ENCODE measurements at regions of chr17 and their contacts with region 1.

Region 1: GRCh38 chr17:30477083-30477773 is at the start of gene GOSR1:
- DNase-seq: peak; percentile 96
- ATAC-seq: peak; percentile 99
- H3K4me3 Mint-ChIP-seq: peak within 1 kb of the TSS; percentile 95
- H3K27ac Mint-ChIP-seq: peak within 1 kb of the TSS; percentile 97
- H3K4me1 Mint-ChIP-seq: peaks cover 30% of the 10 kb centered on the region
- H3K27me3 Mint-ChIP-seq: peaks cover 6% of the 10 kb centered on the region
- total RNA-seq, gene GOSR1: 41.5 to 44.0 TPM

Region 2: DNA sequence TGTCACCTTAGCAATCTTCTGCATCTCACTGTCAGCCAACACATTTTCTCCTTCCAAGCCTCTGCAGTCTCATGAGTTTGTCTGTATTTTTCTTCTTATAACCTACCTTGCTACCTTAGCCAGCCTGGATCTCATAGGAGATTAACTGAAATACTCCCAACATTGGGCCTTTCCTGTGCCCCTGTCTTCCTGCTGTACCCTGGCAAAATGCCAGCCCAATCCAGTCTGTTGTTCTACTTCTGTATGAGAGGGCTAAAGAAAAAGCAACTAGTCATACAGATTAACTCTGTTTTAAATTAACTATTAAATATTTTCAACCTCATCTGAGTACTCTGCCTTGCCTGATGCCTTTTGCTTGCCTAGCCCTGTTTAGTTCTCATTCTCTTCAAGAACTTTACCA is 18.4 kb after region 1 on chr17:
- CTCF ChIA-PET with region 1: interaction called, 14 read pairs
- POLR2A ChIA-PET with region 1: no interaction called
- DNase-seq: no peak
- ATAC-seq: no peak
- H3K4me3 Mint-ChIP-seq: no peak overlapping the region
- H3K27ac Mint-ChIP-seq: no peak overlapping the region
- H3K4me1 Mint-ChIP-seq: peaks cover 11% of the 10 kb centered on the region
- H3K27me3 Mint-ChIP-seq: no peaks in the 10 kb centered on the region

Region 3: DNA sequence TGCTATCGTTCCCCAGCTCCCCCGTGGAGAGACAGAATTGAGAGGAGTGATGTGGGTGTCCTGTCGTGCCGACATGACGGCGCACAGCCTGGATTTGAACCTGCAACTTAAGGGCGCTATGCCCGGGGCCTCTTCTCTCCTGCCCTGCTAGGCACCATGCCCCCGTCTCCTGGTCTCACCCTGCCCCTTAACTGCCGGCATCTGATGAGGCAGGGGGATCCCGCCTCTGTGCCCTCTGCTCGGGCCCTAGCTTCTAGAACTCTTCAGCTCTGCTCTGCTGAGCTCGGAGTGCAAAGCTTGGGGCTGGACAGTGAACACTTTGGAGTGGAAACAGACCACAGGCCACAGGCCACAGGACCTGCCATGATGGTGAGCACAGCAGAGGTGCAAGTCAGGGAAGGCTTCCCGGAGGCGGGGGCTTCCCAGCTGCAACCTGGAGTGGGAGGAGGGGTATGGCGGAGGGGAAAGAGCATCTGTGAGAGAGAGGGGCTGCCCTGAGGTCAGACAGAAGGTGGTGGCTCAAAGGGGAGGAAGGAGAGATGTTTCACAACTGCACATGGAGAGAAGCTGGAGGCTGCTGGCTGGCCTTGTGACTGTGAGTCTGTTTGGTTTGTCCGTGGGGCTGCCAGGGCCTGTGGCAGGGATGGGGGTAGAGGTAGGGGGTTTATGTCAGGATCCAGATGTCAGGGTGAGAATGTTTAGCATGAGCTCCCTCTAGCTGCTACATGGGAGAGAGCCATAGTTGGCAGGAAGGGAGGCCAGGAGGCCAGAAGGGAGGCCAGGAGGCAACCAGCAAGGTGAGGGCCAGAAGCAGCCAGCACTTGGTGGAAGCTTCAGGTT is 239.5 kb after region 1 on chr17:
- CTCF ChIA-PET with region 1: interaction called, 13 read pairs
- POLR2A ChIA-PET with region 1: no interaction called
- DNase-seq: no peak
- ATAC-seq: no peak
- H3K4me3 Mint-ChIP-seq: no peak overlapping the region
- H3K27ac Mint-ChIP-seq: no peak overlapping the region
- H3K4me1 Mint-ChIP-seq: peaks cover 12% of the 10 kb centered on the region
- H3K27me3 Mint-ChIP-seq: peaks cover under 1% of the 10 kb centered on the region

Measured in activated CD8-positive, alpha-beta T cell treated with anti-CD3 and anti-CD28 coated beads, Interleukin-2, amount 10 ng/mL, durations not matched to agents 7 days and 5 days (primary cell).